ENCODE measurements at regions of chr4 and their contacts with region 1.

Region 1: GRCh38 chr4:143558823-143559756 is 45.6 kb downstream of the SMARCA5 start:
- DNase-seq: peak; percentile 46 to 90 (median 66)
- ATAC-seq: peak; percentile 83
- H3K4me3 ChIP-seq: peak overlapping the region; percentile 72
- H3K4me3 Mint-ChIP-seq: peak overlapping the region; percentile 96
- H3K27ac ChIP-seq: peak overlapping the region; percentile 22 to 42
- H3K27ac Mint-ChIP-seq: peak overlapping the region; percentile 85
- H3K4me1 ChIP-seq: peaks cover 11% of the 10 kb centered on the region
- H3K4me1 Mint-ChIP-seq: peaks cover 25% of the 10 kb centered on the region
- H3K27me3 ChIP-seq: no peaks in the 10 kb centered on the region
- H3K27me3 Mint-ChIP-seq: no peaks in the 10 kb centered on the region
- CTCF ChIP-seq: peak; percentile 77

Region 2: DNA sequence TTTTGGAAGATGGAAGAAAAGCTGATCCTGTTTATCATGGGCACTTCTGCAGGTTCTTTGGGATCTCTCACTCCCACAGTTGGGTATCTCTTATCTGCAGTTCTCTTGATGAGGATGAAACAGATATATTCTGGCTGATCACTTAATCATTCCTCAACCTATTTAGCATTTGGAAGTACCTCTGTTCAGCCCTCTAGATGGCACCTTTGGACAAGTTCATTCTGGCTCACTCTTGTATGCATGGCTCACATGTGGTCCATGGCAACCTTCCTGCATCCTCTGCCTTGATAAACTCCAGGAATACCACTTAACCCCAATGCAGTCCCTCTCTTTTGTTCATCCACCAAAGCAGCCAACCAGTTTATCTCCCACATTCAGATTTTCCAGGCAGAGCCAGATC is 28.6 kb after region 1 on chr4:
- CTCF ChIA-PET with region 1: no interaction called
- POLR2A ChIA-PET with region 1: no interaction called
- intact Hi-C with region 1: no loop called
- DNase-seq: no peak
- ATAC-seq: no peak
- H3K4me3 ChIP-seq: no peak overlapping the region
- H3K4me3 Mint-ChIP-seq: no peak overlapping the region
- H3K27ac ChIP-seq: no peak overlapping the region
- H3K27ac Mint-ChIP-seq: no peak overlapping the region
- H3K4me1 ChIP-seq: no peaks in the 10 kb centered on the region
- H3K4me1 Mint-ChIP-seq: no peaks in the 10 kb centered on the region
- H3K27me3 ChIP-seq: no peaks in the 10 kb centered on the region
- H3K27me3 Mint-ChIP-seq: no peaks in the 10 kb centered on the region
- CTCF ChIP-seq: no peak

Region 3: DNA sequence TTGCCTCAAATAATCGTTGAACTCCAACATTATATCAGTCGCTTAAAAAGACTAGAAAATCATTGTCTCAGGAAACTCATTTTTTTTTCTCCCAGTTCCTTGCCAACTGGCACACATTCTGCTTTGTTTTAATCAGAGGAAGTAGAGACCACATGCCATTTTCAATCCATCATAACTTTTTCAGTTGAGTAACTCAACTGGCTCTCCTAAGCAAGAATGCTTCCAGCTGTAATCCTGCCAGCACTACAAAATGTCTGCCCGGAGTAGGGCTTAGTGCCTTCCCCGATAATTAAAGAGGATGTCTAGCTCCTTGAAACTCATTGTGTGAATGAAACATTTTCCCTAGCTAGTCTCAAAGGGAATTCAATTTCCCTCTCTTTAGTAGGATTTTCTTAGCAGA is 108.4 kb after region 1 on chr4:
- CTCF ChIA-PET with region 1: no interaction called
- POLR2A ChIA-PET with region 1: no interaction called
- intact Hi-C with region 1: no loop called
- DNase-seq: no peak
- ATAC-seq: no peak
- H3K4me3 ChIP-seq: no peak overlapping the region
- H3K4me3 Mint-ChIP-seq: no peak overlapping the region
- H3K27ac ChIP-seq: no peak overlapping the region
- H3K27ac Mint-ChIP-seq: no peak overlapping the region
- H3K4me1 ChIP-seq: no peaks in the 10 kb centered on the region
- H3K4me1 Mint-ChIP-seq: no peaks in the 10 kb centered on the region
- H3K27me3 ChIP-seq: no peaks in the 10 kb centered on the region
- H3K27me3 Mint-ChIP-seq: no peaks in the 10 kb centered on the region
- CTCF ChIP-seq: no peak

Region 4: DNA sequence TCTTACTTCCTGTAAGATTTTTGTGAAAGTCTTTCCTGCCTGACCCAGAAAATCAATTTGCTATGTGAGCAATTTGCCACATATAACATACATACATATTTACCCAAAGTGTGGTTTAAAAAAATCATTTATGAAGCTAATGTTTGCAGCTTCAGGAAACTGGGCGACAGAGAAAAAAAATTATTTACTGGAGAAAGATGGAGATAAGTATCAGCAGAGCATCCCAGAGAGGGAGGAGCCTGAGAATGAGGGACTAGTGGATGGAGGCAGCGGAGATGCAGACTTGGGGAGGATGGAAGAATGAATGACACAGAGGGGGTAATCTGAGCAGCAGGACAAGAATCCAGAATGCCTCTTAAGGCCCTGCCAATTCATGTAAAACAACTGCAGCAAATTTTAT is 582.4 kb after region 1 on chr4:
- CTCF ChIA-PET with region 1: no interaction called
- POLR2A ChIA-PET with region 1: no interaction called
- intact Hi-C with region 1: loop called in 1 of 2 experiments (anchors 5 kb)
- DNase-seq: no peak
- ATAC-seq: no peak
- H3K4me3 ChIP-seq: no peak overlapping the region
- H3K4me3 Mint-ChIP-seq: no peak overlapping the region
- H3K27ac ChIP-seq: no peak overlapping the region
- H3K27ac Mint-ChIP-seq: no peak overlapping the region
- H3K4me1 ChIP-seq: no peaks in the 10 kb centered on the region
- H3K4me1 Mint-ChIP-seq: no peaks in the 10 kb centered on the region
- H3K27me3 ChIP-seq: no peaks in the 10 kb centered on the region
- H3K27me3 Mint-ChIP-seq: no peaks in the 10 kb centered on the region
- CTCF ChIP-seq: no peak

Region 5: GRCh38 chr4:145061318-145061920 is 1502.3 kb after region 1 on chr4:
- CTCF ChIA-PET with region 1: no interaction called
- POLR2A ChIA-PET with region 1: no interaction called
- intact Hi-C with region 1: loop called in 1 of 2 experiments (anchors 5 kb)
- DNase-seq: peak in 3 of 14 experiments; percentile 60 to 67 (median 62)
- ATAC-seq: peak; percentile 58
- H3K4me3 ChIP-seq: no peak overlapping the region
- H3K4me3 Mint-ChIP-seq: no peak overlapping the region
- H3K27ac ChIP-seq: no peak overlapping the region
- H3K27ac Mint-ChIP-seq: no peak overlapping the region
- H3K4me1 ChIP-seq: no peaks in the 10 kb centered on the region
- H3K4me1 Mint-ChIP-seq: peaks cover 25% of the 10 kb centered on the region
- H3K27me3 ChIP-seq: no peaks in the 10 kb centered on the region
- H3K27me3 Mint-ChIP-seq: no peaks in the 10 kb centered on the region
- CTCF ChIP-seq: peak; percentile 79